ENCODE measurements at regions of chr15 and their contacts with region 1.

Region 1: DNA sequence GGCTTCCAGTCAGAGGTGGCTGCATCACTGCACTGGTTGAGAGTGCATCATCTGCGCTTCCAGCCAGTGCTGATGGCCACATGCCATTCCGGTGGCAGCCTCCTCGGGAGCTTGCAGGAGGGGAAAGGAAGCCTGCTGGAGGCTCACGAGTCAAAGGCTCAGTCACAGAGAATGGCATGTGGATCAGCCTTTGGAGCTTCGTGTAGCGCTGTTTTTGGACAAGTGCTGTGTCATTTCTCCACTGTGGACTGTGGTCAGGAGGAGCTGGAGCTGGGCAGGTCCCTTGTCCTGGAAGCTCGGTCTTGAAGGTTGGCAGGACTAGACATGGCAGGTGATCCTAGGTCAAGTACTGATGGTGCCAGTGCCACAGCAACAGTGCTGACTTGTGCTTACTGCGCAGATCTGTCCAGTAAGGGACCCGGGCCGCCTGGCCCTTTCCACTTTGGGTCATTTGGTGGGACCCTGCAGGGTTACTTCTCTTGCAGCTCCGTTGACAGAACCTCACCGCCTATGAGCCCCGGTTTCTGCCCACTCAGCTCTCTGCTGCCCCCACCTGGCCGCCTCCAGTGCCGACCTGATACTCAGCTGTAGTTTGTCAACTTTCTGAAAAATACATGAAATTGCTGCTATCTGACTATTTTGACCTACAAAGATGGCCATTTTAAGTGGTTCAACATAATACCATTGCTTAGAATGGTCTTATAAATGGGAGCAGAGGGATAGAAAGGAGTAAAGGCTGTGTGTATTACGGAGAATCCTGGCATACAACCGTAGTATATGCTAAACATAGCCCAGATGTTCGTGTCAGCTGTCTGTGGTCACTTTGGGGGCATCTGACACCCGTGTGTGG is 27.6 kb upstream of the TRPM1 start:
- DNase-seq: peak; percentile 61
- H3K4me3 Mint-ChIP-seq: no peak overlapping the region
- H3K27ac Mint-ChIP-seq: no peak overlapping the region
- H3K4me1 Mint-ChIP-seq: no peaks in the 10 kb centered on the region
- H3K27me3 Mint-ChIP-seq: no peaks in the 10 kb centered on the region
- CTCF ChIP-seq: peak; percentile 92

Region 2: GRCh38 chr15:30896211-30896606 is 232.9 kb before region 1 on chr15:
- CTCF ChIA-PET with region 1: interaction called, 29 read pairs
- POLR2A ChIA-PET with region 1: no interaction called
- intact Hi-C with region 1: loop called (anchors 2 kb)
- DNase-seq: no peak
- H3K4me3 Mint-ChIP-seq: no peak overlapping the region
- H3K27ac Mint-ChIP-seq: no peak overlapping the region
- H3K4me1 Mint-ChIP-seq: no peaks in the 10 kb centered on the region
- H3K27me3 Mint-ChIP-seq: no peaks in the 10 kb centered on the region
- CTCF ChIP-seq: no peak

Region 3: DNA sequence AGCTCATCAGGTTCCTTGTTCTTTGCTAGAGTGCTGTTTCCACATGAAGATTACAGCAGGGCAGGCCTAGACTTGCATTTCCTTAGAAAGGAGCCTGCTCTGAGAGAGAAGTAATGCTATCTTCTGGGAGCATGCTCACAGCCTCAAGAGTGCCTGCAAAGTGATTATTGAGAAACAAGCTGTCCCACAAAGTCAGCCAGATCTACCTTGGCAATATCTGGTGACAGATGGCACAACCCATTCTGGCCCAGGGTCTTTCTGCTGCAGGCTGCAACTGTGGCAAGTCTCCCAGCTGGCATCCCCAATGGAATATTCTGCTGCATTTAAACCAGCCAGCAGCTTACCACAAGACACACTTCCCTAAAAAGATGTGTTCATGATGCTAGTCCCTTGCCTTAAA is 167.1 kb before region 1 on chr15:
- CTCF ChIA-PET with region 1: interaction called, 37 read pairs
- POLR2A ChIA-PET with region 1: interaction called, 6 read pairs
- intact Hi-C with region 1: no loop called
- DNase-seq: peak; percentile 64
- H3K4me3 Mint-ChIP-seq: peak overlapping the region; percentile 13
- H3K27ac Mint-ChIP-seq: peak overlapping the region; percentile 61
- H3K4me1 Mint-ChIP-seq: peaks cover 15% of the 10 kb centered on the region
- H3K27me3 Mint-ChIP-seq: no peaks in the 10 kb centered on the region
- CTCF ChIP-seq: no peak

Region 4: GRCh38 chr15:31116423-31117030 is 12.6 kb before region 1 on chr15:
- CTCF ChIA-PET with region 1: interaction called, 43 read pairs
- POLR2A ChIA-PET with region 1: interaction called, 3 read pairs
- intact Hi-C with region 1: no loop called
- DNase-seq: no peak
- H3K4me3 Mint-ChIP-seq: no peak overlapping the region
- H3K27ac Mint-ChIP-seq: no peak overlapping the region
- H3K4me1 Mint-ChIP-seq: no peaks in the 10 kb centered on the region
- H3K27me3 Mint-ChIP-seq: no peaks in the 10 kb centered on the region
- CTCF ChIP-seq: no peak

Measured in MCF 10A (cell line).